Lower leg skin (tissue), 4 donors: ENCODE measurements at regions of chr1 and their contacts with region 1.

Region 1: GRCh38 chr1:37602750-37603694 is 7.3 kb upstream of the GNL2 start:
- DNase-seq: no peak
- H3K4me3 ChIP-seq: no peak overlapping the region
- CTCF ChIP-seq: no peak
- POLR2A ChIP-seq: no peak

Region 2: DNA sequence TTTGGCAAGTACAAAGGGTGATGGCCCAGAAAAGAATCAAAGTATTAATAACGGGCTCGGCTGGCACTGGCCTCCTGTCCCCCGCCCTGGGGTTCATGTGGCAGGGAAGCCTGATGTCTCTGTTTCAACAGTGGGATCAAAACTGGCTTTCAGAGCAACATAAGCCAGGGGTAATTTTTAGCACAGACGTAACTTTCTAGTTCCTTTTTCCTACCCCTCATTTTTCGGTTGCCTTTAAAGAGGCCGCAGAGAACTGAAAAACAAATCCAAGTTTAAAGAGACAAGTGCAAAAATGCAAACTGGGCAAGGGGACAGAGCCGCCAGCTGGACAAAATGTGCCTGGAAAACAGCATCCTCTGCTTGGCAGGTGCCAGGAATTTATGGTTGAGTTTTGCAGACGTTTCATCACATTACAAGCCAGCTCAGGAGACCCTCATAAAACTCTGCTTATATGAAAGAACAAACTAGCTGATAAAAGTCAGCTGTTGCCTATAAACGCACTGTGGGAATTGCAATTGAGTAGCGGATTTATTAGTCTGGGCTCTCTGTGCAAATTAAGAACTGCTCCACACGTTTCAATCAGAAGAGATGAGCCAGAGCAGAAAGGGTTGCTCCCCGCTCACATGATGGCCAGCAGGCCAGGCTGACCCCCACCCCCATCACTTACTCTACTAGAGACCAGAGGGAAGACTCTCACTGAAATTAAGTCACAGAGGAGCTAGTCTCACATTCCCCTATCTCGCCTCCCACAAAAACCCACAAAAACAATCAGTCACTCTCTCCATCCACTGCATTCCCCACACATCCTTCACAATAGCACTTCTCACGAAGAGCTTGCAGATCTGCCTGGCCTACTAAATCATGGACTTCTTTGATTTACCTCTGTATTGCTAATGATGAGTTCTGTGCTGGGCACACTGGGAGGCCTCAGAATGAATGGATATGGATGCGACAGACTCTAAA is 73.5 kb after region 1 on chr1:
- intact Hi-C with region 1: loop called (anchors 10 kb)
- DNase-seq: no peak
- H3K4me3 ChIP-seq: no peak overlapping the region
- CTCF ChIP-seq: no peak
- POLR2A ChIP-seq: no peak